ENCODE measurements at regions of chr15 and their contacts with region 1.

Region 1: DNA sequence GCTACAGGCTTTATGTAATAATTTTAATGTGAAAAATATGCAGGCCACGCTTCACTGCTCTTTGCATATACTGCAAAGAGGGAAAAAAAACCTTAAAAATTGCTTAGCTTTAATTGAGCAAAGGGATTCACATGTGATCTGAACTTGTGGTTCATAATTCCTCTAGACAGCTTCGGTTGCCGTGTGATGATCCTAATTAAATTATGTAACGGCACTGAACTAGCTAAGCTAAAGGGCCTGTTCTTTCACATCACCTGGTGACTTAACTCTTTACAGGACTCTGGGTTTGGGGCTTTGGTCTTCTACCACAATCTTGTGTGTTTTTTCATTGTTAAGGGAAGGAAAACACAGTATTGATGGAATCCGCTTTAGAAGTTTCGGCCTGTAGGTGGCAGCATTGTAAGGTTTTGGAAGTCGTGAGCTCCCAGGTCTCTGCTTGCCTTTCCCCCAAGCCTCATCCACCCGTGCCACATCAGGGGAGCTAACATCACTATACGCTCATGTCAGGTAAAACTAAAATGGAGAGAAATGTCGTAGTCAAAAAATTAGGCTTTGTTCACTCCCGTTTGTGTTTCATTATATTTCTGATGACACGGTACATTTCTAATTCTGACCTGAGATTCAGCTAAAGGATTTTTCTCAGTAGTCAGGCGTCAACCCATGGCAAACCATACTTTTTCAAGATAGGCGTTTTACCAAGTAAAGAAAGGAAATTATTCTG is 205.6 kb upstream of the DPH6 start:
- DNase-seq: peak; percentile 87 to 90
- H3K4me3 ChIP-seq: no peak overlapping the region
- H3K4me1 ChIP-seq: peaks cover 16% of the 10 kb centered on the region
- H3K27me3 ChIP-seq: no peaks in the 10 kb centered on the region

Region 2: DNA sequence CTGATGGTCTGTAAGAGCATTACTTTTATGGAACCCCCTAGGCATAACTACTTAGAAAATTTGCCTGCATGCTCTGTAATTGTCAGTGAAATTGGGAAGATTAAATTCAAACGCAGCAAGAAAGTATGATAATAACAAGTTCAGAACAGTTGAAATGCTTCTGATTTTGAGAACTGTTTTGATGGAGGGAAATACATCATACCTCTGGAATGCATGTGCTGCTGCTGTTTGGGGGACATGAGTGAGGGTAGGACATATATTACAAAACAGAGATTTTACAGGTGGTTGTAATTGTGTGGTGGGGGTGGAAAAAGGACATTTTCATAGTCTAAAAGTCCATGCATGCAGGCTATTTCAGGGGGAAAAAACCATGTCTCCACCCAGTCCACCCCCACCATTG is 70.6 kb before region 1 on chr15:
- in situ Hi-C with region 1: no loop called
- DNase-seq: no peak
- H3K4me3 ChIP-seq: no peak overlapping the region
- H3K4me1 ChIP-seq: no peaks in the 10 kb centered on the region
- H3K27me3 ChIP-seq: no peaks in the 10 kb centered on the region

Region 3: DNA sequence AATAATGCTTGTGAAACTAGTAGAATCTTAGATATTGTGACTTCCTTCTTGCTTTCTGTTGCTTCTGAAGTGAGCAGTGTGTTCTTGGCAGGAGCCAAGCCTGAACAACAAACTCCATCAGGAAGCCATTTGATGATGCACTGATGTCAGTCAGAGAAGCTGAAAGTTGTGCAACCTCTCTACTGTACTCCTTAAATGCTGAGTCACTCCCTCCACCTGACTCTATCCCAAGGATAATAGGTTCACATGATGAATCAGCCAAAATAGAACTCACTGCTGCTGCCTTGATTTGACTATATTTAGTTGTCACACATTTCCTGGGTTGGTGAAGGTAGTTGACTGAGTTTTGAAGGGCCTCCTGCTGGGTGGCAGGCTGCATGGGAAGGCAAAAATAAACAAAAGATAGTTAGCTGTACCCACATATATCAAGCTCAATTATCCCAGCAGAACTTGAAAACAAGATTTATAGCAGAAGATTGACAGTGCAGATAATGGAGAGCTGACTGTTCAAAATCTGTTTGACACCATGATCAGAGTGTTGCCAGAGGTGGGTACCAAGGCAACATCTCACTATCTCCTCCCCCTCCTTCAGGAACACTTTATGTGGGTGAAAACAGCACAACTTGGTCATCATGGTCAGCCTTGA is 122.8 kb after region 1 on chr15:
- in situ Hi-C with region 1: loop called (anchors 25 kb)
- DNase-seq: no peak
- H3K4me3 ChIP-seq: no peak overlapping the region
- H3K4me1 ChIP-seq: no peaks in the 10 kb centered on the region
- H3K27me3 ChIP-seq: no peaks in the 10 kb centered on the region

Measured in HAP-1 (cell line).